ENCODE measurements at regions of chr12 and their contacts with region 1.

Region 1: DNA sequence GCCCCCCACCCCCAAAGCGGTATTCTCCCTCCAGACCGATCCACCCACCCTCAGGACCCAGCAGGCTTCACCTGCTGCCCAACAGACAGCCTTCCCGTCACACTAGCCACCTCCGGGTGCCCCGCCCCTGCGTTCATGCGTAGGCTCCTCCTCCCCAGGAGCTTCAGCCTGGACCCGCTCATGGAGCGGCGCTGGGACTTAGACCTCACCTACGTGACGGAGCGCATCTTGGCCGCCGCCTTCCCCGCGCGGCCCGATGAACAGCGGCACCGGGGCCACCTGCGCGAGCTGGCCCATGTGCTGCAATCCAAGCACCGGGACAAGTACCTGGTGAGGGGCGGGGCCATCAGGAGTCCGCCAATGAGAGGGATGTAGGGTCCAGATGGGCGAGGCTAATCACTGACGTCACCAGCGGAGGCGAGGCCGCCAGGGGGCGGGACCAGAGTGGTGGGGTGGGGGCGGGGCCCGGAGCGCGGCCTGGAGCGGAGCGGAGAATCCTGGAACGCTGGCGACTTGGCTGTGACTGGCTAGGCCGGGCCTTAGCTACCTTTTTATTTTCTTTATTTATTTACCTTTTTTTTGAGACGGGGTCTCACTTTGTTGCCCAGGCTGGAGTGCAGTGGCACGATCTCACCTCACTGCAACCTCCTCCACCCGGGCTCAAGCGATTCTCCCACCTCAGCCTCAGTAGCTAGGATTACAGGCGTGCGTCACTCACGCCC is 4.4 kb downstream of the TNS2 start:
- DNase-seq: peak; percentile 96
- H3K4me3 Mint-ChIP-seq: peak overlapping the region; percentile 91
- H3K27ac Mint-ChIP-seq: peak overlapping the region; percentile 89
- H3K4me1 Mint-ChIP-seq: peaks cover 25% of the 10 kb centered on the region
- H3K27me3 Mint-ChIP-seq: peaks cover 55% of the 10 kb centered on the region

Region 2: DNA sequence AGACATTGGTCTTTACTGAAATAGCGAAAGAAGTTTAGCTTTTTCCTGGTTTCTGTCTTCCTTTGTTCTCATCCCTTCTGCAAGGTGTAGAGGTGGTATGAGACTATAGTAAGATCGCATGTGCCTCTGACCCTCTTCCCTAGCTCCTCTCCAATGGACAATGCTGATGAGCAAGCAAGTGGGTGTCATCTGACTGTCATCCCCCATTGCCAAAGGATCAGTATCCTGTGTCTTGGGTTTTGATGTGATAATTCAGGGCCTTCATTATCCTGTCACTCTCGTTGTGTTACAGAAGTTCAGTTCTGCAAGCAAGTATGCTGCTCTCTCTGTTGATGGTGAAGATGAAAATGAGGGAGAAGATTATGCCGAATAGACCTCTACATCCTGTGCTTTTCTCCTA is 14.4 kb before region 1 on chr12:
- CTCF ChIA-PET with region 1: interaction called, 33 read pairs
- DNase-seq: no peak
- H3K4me3 Mint-ChIP-seq: no peak overlapping the region
- H3K27ac Mint-ChIP-seq: no peak overlapping the region
- H3K4me1 Mint-ChIP-seq: peaks cover 30% of the 10 kb centered on the region
- H3K27me3 Mint-ChIP-seq: peaks cover 10% of the 10 kb centered on the region

Region 3: GRCh38 chr12:53079226-53080117 is 25.2 kb after region 1 on chr12 and contains the start of gene SPRYD3:
- CTCF ChIA-PET with region 1: interaction called, 10 read pairs
- DNase-seq: peak; percentile 98
- H3K4me3 Mint-ChIP-seq: peak within 1 kb of the TSS; percentile 92
- H3K27ac Mint-ChIP-seq: peak within 1 kb of the TSS; percentile 92
- H3K4me1 Mint-ChIP-seq: peaks cover 29% of the 10 kb centered on the region
- H3K27me3 Mint-ChIP-seq: no peaks in the 10 kb centered on the region

Region 4: DNA sequence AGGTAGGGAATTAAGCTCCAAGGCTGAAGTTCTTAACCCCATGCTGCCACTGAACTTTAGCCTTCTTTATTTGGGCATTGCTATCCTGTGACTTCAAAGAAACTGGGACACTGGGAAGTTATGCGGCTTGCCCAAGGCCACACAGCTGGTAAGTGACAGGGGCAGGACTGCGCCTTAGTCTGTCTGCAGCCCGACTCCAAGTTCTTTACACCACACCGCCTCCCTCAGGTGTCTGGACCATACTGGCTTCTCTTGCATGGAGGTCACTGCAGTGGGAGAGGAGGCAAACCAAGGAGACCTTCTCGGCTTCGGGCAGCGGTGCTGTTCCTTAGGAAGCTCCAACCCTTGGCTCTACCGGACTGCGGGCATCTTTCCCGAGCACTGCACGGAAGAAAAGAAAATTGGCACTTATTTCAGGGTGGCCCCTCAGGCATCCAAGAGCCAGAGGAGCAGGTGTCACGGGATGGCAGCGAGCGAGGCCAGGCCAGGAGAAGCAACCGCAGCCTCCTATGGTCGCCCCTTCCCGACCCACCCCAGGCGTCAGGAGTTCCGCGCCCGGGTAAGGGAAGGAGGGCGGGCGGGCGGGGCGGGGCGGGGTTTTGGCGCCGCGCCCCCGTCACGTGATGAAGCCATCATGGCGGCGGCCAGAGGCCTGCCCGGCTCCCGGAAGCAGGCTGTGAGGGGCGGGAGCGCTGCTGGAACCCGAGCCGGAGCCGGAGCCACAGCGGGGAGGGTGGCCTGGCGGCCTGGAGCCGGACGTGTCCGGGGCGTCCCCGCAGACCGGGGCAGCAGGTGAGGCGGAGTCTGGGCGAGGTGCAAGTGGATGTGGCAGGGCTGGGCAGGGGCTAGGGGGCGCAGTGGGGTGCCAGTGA is 197.4 kb after region 1 on chr12:
- CTCF ChIA-PET with region 1: no interaction called
- DNase-seq: peak; percentile 85
- H3K4me3 Mint-ChIP-seq: peak overlapping the region; percentile 96
- H3K27ac Mint-ChIP-seq: peak overlapping the region; percentile 89
- H3K4me1 Mint-ChIP-seq: peaks cover 48% of the 10 kb centered on the region
- H3K27me3 Mint-ChIP-seq: peaks cover 6% of the 10 kb centered on the region

Measured in activated naive CD4-positive, alpha-beta T cell treated with anti-CD3 and anti-CD28 coated beads, Interleukin-2, amount 10 ng/mL, durations not matched to agents 7 days and 5 days (primary cell).